Astrocyte of the cerebellum (primary cell): ENCODE measurements at regions of chr13 and their contacts with region 1.

Region 1: GRCh38 chr13:90405301-90405700 is 942.2 kb upstream of the MIR17HG start:
- DNase-seq: no peak
- H3K4me3 ChIP-seq: no peak overlapping the region
- CTCF ChIP-seq: no peak

Region 2: DNA sequence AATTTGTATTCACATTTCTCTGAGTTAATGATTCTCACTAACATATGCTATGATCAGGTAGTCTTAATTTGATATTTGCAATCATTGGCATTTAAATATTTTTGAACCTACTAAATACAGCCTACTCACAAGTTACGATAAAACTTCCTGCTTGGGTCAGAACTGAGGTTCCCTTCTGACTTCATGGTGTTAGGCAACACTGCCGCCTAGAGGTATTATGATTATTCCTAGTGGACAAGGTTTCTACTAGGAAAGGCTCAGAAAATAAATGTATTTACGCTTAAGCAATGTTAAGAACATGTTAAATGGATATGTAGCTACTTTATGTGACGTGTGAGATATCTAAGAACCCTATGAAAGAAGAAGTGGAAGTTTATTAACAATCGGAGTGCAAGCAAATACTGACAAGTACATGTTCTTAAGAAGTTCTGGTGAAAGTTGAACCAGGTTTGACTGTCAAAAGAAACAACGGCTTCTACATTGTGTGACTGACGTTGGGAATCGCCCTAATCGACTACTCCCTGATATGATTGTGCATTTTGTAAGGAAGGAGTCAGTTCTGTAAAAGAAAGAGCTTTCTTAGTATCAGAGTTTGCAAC is 1338.3 kb before region 1 on chr13:
- in situ Hi-C with region 1: no loop called
- DNase-seq: peak; percentile 53
- H3K4me3 ChIP-seq: no peak overlapping the region
- CTCF ChIP-seq: peak; percentile 82

Region 3: DNA sequence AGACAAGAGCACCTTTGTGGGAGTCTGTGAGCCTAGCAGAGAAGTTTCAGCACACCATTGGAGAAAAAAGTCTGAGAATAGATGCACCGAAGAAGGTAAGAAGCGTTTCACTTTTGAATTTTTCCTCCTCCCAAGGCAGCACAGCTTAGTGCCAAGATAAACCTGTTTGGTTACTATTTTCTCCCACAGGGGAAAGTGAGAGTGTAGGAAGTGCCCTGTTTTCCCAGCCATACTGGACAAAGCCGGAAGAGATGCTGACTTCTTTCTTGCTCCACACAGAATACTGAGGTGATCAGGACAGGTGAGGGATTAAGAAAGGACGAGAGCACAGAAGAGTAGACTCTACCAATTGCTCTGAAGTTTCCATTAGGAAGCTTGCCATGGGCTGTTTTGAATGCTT is 68.8 kb before region 1 on chr13:
- in situ Hi-C with region 1: no loop called
- DNase-seq: no peak
- H3K4me3 ChIP-seq: no peak overlapping the region
- CTCF ChIP-seq: no peak

Region 4: GRCh38 chr13:90485436-90485835 is 80.1 kb after region 1 on chr13:
- in situ Hi-C with region 1: loop called (anchors 5 kb)
- DNase-seq: peak; percentile 74
- H3K4me3 ChIP-seq: no peak overlapping the region
- CTCF ChIP-seq: no peak